ENCODE measurements at regions of chr9 and their contacts with region 1.

Region 1: GRCh38 chr9:129641746-129642513 is at the start of gene ASB6:
- DNase-seq: peak; percentile 96 to 98 (median 98)
- H3K4me3 ChIP-seq: peak within 1 kb of the TSS; percentile 89 to 92 (median 90)
- H3K4me3 Mint-ChIP-seq: peak within 1 kb of the TSS; percentile 82 to 88
- H3K27ac ChIP-seq: peak within 1 kb of the TSS; percentile 76 to 77
- H3K27ac Mint-ChIP-seq: peak within 1 kb of the TSS; percentile 80 to 90 (median 87)
- H3K4me1 ChIP-seq: peaks cover 19 to 29% of the 10 kb centered on the region in 2 donors
- H3K4me1 Mint-ChIP-seq: peaks cover 29% of the 10 kb centered on the region
- H3K27me3 ChIP-seq: no peaks in the 10 kb centered on the region
- H3K27me3 Mint-ChIP-seq: peaks cover 2 to 14% (median 4%) of the 10 kb centered on the region in 3 donors
- CTCF ChIP-seq: peak; percentile 100
- polyA plus RNA-seq, gene ASB6: 8.1 to 21.1 (median 10.1) TPM

Region 2: GRCh38 chr9:129626079-129626624 is 15.8 kb before region 1 on chr9 and contains the start of gene NTMT1:
- intact Hi-C with region 1: loop called in 1 of 2 experiments (anchors 2 kb)
- DNase-seq: peak; percentile 90 to 92 (median 90)
- H3K4me3 ChIP-seq: peak within 1 kb of the TSS; percentile 51 to 83 (median 75)
- H3K4me3 Mint-ChIP-seq: peak within 1 kb of the TSS; percentile 80 to 94
- H3K27ac ChIP-seq: peak within 1 kb of the TSS; percentile 86 to 97
- H3K27ac Mint-ChIP-seq: peak within 1 kb of the TSS; percentile 89 to 96 (median 93)
- H3K4me1 ChIP-seq: peaks cover 47 to 56% of the 10 kb centered on the region in 2 donors
- H3K4me1 Mint-ChIP-seq: peaks cover 64% of the 10 kb centered on the region
- H3K27me3 ChIP-seq: peaks cover 0 to 5% of the 10 kb centered on the region in 2 donors
- H3K27me3 Mint-ChIP-seq: peaks cover 5 to 9% (median 6%) of the 10 kb centered on the region in 3 donors
- CTCF ChIP-seq: no peak
- polyA plus RNA-seq, gene NTMT1: 16.0 to 43.9 (median 28.2) TPM

Region 3: DNA sequence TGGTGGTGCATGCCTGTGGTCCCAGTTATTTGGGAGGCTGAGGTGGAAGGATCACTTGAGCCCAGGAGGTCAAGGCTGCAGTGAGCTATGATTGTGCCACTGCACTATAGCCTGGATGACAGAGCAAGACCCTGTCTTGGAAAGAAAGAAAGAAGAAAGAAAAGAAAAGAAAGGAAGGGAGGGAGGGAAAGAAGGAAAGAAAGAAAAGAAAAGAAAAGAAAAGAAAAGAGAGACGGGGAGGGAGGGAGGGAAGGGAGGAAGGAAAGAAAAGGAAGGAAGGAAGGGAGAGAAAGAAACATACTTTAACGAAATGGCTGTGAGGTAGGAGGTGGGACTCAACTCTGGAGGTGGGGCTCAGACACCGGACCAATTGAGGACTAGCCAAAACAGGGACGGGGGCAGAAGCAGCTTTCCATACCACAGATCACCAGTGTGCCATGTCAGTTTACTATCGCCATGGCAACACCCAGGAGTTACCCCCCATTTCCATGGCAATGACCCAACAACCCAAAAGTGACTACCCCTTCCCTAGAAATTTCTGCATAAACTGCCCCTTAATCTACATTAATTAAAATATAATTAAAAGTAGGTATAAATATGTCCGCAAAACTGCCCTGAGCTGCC is 89.7 kb after region 1 on chr9:
- intact Hi-C with region 1: loop called in 1 of 2 experiments (anchors 5 kb)
- DNase-seq: no peak
- H3K4me3 ChIP-seq: no peak overlapping the region
- H3K4me3 Mint-ChIP-seq: peak overlapping the region in 1 of 2 donors; percentile 18
- H3K27ac ChIP-seq: no peak overlapping the region
- H3K27ac Mint-ChIP-seq: peak overlapping the region in 2 of 7 donors; percentile 35 to 45
- H3K4me1 ChIP-seq: peaks cover 3% of the 10 kb centered on the region in 2 donors
- H3K4me1 Mint-ChIP-seq: peaks cover 2% of the 10 kb centered on the region
- H3K27me3 ChIP-seq: peaks cover 0 to 2% of the 10 kb centered on the region in 2 donors
- H3K27me3 Mint-ChIP-seq: peaks cover 15 to 40% (median 16%) of the 10 kb centered on the region in 3 donors
- CTCF ChIP-seq: no peak

Region 4: DNA sequence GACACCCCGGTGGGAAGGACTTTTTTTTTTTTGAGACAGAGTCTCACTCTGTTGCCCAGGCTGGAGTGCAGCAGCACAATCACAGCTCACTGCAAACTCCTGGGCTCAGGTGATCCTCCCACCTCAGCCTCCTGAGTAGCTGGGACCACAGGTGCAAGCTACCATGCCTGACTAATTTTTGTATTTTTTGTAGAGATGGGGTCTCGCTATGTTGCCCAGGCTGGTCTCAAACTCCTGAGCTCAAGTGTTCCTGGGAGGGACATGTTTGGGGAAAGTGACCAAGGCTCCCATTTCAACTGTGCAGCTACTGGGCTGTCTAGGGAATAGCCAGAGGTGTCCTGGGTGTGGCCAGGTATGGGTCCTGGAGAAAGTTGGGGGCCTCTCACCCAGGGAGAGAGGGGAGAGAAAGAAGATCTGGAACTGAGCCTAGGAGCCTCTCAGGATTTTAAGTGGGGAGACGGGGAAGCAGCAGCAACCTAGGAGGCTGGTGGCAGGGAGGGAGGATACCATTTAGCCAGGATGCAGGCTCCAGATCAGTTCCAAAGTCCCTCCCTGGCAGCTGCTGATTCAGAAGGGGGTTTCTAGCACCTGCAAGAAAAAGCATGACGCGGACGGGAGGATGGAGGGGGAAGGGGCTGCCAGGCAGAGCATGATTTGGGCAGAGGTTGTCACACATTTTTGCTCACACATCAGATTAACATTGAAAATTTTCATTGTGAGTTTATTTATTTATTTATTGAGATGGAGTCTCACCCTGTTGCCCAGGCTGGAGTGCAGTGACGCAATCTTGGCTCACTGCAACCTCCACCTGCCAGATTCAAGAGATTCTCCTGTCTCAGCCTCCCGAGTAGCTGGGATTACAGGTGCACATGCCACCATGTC is 154.3 kb after region 1 on chr9:
- intact Hi-C with region 1: loop called (anchors 5 kb)
- DNase-seq: no peak
- H3K4me3 ChIP-seq: no peak overlapping the region
- H3K4me3 Mint-ChIP-seq: no peak overlapping the region
- H3K27ac ChIP-seq: no peak overlapping the region
- H3K27ac Mint-ChIP-seq: no peak overlapping the region
- H3K4me1 ChIP-seq: no peaks in the 10 kb centered on the region
- H3K4me1 Mint-ChIP-seq: no peaks in the 10 kb centered on the region
- H3K27me3 ChIP-seq: no peaks in the 10 kb centered on the region
- H3K27me3 Mint-ChIP-seq: peaks cover 14 to 18% (median 17%) of the 10 kb centered on the region in 3 donors
- CTCF ChIP-seq: no peak

Measured in CD14-positive monocyte (primary cell).